Activated CD8-positive, alpha-beta T cell treated with anti-CD3 and anti-CD28 coated beads for 36 hours (primary cell): ENCODE measurements at regions of chr1 and their contacts with region 1.

Region 1: DNA sequence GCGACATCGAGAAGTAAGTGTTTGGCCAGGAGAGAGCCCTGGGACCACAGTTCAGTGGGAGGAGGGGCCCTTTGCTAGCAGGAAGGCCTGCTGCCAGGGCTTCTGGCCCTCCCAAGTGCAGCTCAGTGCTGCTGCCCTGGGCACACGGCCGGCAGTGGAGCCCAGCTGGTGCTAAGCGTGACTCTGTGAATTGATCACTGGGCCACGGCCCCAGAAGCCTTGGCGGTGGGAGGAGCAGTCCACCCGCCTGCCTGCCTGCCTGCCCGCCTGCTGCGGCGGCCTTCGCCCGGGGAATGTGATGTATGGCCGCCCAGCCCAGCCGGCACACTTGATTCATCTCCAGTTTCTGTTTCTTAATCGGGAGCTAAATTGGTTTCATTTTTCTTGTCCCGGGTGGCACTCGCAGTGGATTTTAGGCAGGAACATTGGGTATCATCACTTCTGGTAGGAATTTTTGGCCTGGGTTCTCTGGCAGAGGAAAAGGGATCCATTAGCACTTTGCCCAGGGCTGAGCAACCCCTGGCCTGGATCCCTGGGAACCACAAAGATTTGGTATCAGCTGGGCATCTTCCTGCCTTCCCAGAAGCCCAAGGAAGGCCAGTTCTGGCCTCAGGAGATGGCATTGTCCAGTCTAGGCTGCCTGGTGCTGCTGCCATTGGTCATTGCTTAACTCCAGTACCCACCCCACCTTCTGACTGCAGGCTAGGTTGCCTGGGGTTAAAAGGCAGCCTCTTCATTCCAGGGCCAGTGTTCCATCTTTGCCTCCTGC is 28.6 kb downstream of the TMEM53 start:
- DNase-seq: no peak
- ATAC-seq: no peak
- H3K4me3 Mint-ChIP-seq: no peak overlapping the region
- H3K27ac Mint-ChIP-seq: no peak overlapping the region
- H3K4me1 Mint-ChIP-seq: no peaks in the 10 kb centered on the region
- H3K27me3 Mint-ChIP-seq: no peaks in the 10 kb centered on the region
- CTCF ChIP-seq: no peak

Region 2: GRCh38 chr1:44174630-44175029 is 471.0 kb before region 1 on chr1:
- CTCF ChIA-PET with region 1: no interaction called
- POLR2A ChIA-PET with region 1: no interaction called
- intact Hi-C with region 1: no loop called
- DNase-seq: no peak
- ATAC-seq: no peak
- H3K4me3 Mint-ChIP-seq: no peak overlapping the region
- H3K27ac Mint-ChIP-seq: no peak overlapping the region
- H3K4me1 Mint-ChIP-seq: no peaks in the 10 kb centered on the region
- H3K27me3 Mint-ChIP-seq: peaks cover 5% of the 10 kb centered on the region
- CTCF ChIP-seq: no peak

Region 3: GRCh38 chr1:44609412-44609767 is 36.3 kb before region 1 on chr1:
- CTCF ChIA-PET with region 1: interaction called, 69 read pairs
- POLR2A ChIA-PET with region 1: no interaction called
- intact Hi-C with region 1: no loop called
- DNase-seq: peak; percentile 62
- ATAC-seq: no peak
- H3K4me3 Mint-ChIP-seq: no peak overlapping the region
- H3K27ac Mint-ChIP-seq: no peak overlapping the region
- H3K4me1 Mint-ChIP-seq: no peaks in the 10 kb centered on the region
- H3K27me3 Mint-ChIP-seq: no peaks in the 10 kb centered on the region
- CTCF ChIP-seq: peak; percentile 27

Region 4: GRCh38 chr1:44631647-44632539 is 13.8 kb before region 1 on chr1:
- CTCF ChIA-PET with region 1: interaction called, 156 read pairs
- POLR2A ChIA-PET with region 1: interaction called, 71 read pairs
- intact Hi-C with region 1: no loop called
- DNase-seq: peak; percentile 96
- ATAC-seq: peak; percentile 84
- H3K4me3 Mint-ChIP-seq: peak overlapping the region; percentile 88
- H3K27ac Mint-ChIP-seq: peak overlapping the region; percentile 97
- H3K4me1 Mint-ChIP-seq: peaks cover 38% of the 10 kb centered on the region
- H3K27me3 Mint-ChIP-seq: no peaks in the 10 kb centered on the region
- CTCF ChIP-seq: no peak